Cardiac septum (tissue), 1 donor: ENCODE measurements at regions of chr19 and their contacts with region 1.

Region 1: GRCh38 chr19:1863726-1864480 is 524 bp upstream of the KLF16 start:
- DNase-seq: peak; percentile 94

Region 2: GRCh38 chr19:1848399-1849131 is 15.3 kb before region 1 on chr19 and contains the start of gene REXO1:
- intact Hi-C with region 1: no loop called
- DNase-seq: peak; percentile 97
- total RNA-seq, gene REXO1: 16.7 TPM

Region 3: DNA sequence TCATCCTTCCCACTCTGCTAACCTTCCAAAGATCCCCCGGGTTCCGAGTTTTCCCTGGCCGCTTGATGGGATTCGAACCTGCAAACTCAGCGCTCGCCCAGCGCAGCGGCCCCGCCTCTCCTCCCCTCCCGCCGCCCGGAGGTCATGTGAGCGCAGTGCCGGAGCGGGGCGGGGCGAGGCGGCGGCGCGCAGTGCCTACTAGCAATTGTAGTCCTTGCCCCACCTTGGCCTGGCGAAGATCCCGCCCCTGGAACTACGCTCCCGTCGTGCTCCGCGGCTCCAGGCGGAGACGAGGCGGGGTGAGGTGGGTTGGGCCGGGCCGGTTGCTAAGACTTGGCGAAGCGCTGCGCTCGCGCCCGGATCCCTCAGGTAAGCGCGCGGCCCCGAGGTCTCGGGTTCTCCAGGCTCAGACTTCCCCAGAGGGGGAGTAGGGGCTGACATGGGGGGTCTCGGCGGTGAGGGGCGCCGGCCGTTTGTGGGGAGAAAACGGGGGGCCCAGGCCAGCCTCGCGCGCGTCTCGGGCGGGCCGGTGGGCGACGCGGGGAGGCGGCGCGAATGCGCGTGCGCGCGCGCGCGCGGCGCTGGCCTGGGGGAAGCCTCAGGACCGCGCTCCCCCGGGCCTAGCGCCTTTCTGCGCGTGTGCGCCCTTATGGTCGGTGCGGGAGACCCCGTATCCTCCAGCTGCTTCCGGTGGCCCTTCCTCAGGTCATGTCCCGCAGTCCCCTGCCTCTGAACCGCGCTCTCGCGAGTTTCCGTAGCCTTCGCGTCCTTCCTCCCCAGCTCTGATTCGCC is 41.4 kb after region 1 on chr19 and contains the starts of genes ADAT3 and SCAMP4:
- intact Hi-C with region 1: loop called (anchors 2 kb)
- DNase-seq: peak; percentile 100
- total RNA-seq, gene ADAT3: 2.1 TPM
- total RNA-seq, gene SCAMP4: 14.9 TPM